ENCODE measurements at regions of chr15 and their contacts with region 1.

Region 1: DNA sequence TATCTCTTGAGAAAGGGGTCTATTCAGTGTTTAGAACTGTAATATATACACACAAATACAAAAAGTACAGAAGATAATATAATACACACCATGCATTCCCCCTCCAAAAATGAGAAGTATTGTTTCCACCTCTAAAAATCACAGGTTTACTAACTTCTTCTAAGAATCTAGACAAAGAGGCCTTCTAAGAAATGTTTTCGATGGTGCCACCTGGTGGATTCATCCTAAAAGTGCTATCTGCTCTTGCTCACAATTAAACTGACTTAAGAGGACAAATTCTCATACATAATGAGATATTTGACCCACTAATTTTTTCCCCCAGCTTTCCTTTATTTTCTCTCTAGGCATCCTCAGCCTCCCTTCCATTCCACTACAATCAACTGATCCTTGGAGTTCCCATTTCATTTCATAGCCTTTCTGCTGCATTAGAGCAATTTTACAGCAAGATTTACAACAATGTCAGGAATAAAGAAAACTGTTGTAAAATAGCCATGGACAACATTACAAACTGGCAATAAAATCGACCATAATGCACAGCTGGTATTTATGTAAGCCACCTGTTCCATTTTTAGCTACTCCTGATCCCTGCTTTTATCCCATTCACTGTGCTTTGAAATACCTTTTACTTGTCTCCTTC is 124.6 kb downstream of the ARRDC4 start:
- DNase-seq: peak; percentile 61
- H3K4me3 Mint-ChIP-seq: no peak overlapping the region
- H3K27ac Mint-ChIP-seq: no peak overlapping the region
- H3K4me1 Mint-ChIP-seq: no peaks in the 10 kb centered on the region
- H3K27me3 Mint-ChIP-seq: no peaks in the 10 kb centered on the region

Region 2: GRCh38 chr15:97903971-97904572 is 181.0 kb before region 1 on chr15:
- CTCF ChIA-PET with region 1: interaction called, 5 read pairs
- intact Hi-C with region 1: loop called (anchors 1 kb)
- DNase-seq: peak; percentile 41
- H3K4me3 Mint-ChIP-seq: no peak overlapping the region
- H3K27ac Mint-ChIP-seq: no peak overlapping the region
- H3K4me1 Mint-ChIP-seq: no peaks in the 10 kb centered on the region
- H3K27me3 Mint-ChIP-seq: peaks cover 40% of the 10 kb centered on the region

Region 3: GRCh38 chr15:98177924-98178592 is 92.9 kb after region 1 on chr15:
- CTCF ChIA-PET with region 1: no interaction called
- intact Hi-C with region 1: loop called (anchors 5 kb)
- DNase-seq: peak; percentile 49
- H3K4me3 Mint-ChIP-seq: no peak overlapping the region
- H3K27ac Mint-ChIP-seq: no peak overlapping the region
- H3K4me1 Mint-ChIP-seq: peaks cover 8% of the 10 kb centered on the region
- H3K27me3 Mint-ChIP-seq: peaks cover 24% of the 10 kb centered on the region

Region 4: GRCh38 chr15:98292442-98293240 is 207.5 kb after region 1 on chr15:
- CTCF ChIA-PET with region 1: no interaction called
- intact Hi-C with region 1: loop called (anchors 5 kb)
- DNase-seq: peak; percentile 71
- H3K4me3 Mint-ChIP-seq: no peak overlapping the region
- H3K27ac Mint-ChIP-seq: no peak overlapping the region
- H3K4me1 Mint-ChIP-seq: peaks cover 6% of the 10 kb centered on the region
- H3K27me3 Mint-ChIP-seq: peaks cover 37% of the 10 kb centered on the region